Ascending aorta (tissue), 2 donors: ENCODE measurements at regions of chr20 and their contacts with region 1.

Region 1: DNA sequence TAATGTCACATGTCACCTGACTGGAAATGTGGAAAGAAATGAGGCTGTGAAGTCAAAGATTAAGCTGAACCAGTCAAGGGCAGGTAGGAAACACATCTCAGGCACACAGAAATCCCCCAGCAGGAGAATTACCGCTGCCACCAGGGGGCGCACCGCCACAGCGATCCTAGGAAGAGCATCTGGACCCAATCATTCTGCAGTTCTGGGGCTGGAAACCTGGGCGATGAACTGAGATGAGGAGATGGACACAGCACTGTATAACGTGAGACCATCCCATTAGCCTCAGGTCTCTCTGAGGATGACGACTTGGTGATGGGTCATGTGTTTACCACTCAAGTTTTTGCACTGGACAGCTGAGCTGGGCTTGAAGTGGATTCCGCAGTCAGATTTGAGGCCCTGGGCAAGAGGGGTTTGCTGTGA is 6.5 kb upstream of the SLC24A3 start:
- DNase-seq: peak in 1 of 2 donors; percentile 83
- H3K4me3 ChIP-seq: no peak overlapping the region
- H3K27ac ChIP-seq: no peak overlapping the region
- H3K4me1 ChIP-seq: peaks cover under 1 to 9% of the 10 kb centered on the region in 2 donors
- H3K27me3 ChIP-seq: no peaks in the 10 kb centered on the region
- CTCF ChIP-seq: peak; percentile 57 to 91 (median 81)

Region 2: DNA sequence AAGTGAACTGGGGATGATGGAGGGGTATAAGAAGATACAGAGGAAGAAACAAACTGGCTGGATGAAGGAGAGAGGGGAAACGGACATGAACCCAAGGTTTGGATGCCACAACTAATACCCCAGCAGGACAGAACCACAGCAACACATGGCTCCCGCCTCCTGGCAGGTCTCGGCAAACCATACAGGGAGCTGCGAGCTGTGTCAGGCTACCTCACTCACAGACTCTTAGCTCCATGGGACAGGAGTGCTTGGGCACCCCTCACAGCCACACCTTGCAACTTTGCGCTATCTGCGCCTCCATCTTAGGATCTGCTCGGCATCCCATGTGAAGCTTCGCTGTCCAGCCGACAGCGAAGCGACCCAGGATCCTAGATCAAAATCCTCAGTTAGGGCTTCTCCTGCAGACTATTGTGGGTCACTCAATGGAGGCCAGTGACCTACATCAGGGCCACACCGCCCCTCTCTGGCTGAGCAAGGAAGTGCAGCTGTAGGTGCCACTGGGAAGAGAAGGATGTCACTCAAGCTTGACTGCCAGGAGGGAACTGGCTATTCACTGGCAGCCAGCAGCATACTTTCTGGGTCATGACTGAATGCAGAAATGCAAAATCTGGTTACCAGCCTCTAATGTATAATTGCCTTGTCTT is 377.7 kb after region 1 on chr20:
- intact Hi-C with region 1: loop called (anchors 1 kb)
- DNase-seq: peak in 1 of 2 donors; percentile 82
- H3K4me3 ChIP-seq: no peak overlapping the region
- H3K27ac ChIP-seq: no peak overlapping the region
- H3K4me1 ChIP-seq: no peaks in the 10 kb centered on the region
- H3K27me3 ChIP-seq: no peaks in the 10 kb centered on the region
- CTCF ChIP-seq: peak; percentile 74 to 84 (median 81)